Posterior vena cava (tissue), 2 donors: ENCODE measurements at regions of chr12 and their contacts with region 1.

Region 1: DNA sequence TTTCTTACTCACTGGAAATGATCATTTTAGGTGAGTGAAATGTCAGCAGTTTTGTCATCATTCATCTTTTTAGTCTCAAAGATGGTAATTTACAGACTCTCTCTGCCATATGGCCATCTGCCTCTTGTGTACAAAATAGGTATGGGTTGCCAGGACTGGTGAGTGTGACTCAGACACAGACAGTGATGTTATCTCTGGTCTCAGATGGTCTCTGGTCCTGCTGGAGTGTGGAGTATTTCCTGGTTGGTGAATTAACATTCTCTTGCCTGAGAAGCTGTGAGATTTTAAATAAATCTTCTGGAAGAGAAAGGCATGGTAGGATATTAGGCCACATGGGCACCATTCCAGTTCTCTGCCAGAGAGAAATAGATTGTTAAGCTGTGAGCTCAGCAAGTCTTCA is 207.0 kb downstream of the ATP23 start:
- DNase-seq: no peak

Region 2: DNA sequence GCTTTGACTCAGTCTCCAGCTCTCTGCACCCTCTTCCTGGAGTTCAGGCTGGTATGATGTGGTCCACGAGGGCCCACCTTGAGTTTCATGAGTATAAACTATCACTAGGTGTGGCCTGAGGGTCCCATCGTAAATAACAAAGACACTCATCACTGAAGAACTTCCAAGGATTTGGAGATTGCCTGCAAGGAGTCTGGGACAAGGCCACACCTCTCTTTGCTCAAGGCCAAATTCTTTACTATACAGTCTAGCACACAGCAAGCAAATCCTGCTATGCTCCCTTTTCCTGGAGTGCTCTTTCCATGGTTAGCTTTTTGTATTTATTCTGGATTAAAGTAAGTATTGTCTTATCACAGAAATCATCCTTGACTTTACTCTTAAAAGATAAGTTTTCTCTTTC is 1719.3 kb after region 1 on chr12:
- intact Hi-C with region 1: loop called in 1 of 2 experiments (anchors 5 kb)
- DNase-seq: no peak